Gastrocnemius medialis (tissue), 4 donors: ENCODE measurements at regions of chr3 and their contacts with region 1.

Region 1: GRCh38 chr3:151660885-151661284 is 72.8 kb upstream of the AADACL2 start:
- DNase-seq: no peak
- ATAC-seq: no peak
- H3K4me3 ChIP-seq: no peak overlapping the region
- H3K27ac ChIP-seq: no peak overlapping the region
- H3K4me1 ChIP-seq: no peaks in the 10 kb centered on the region
- H3K27me3 ChIP-seq: no peaks in the 10 kb centered on the region
- CTCF ChIP-seq: peak in 3 of 5 experiments; percentile 12 to 28 (median 20)
- POLR2A ChIP-seq: no peak

Region 2: DNA sequence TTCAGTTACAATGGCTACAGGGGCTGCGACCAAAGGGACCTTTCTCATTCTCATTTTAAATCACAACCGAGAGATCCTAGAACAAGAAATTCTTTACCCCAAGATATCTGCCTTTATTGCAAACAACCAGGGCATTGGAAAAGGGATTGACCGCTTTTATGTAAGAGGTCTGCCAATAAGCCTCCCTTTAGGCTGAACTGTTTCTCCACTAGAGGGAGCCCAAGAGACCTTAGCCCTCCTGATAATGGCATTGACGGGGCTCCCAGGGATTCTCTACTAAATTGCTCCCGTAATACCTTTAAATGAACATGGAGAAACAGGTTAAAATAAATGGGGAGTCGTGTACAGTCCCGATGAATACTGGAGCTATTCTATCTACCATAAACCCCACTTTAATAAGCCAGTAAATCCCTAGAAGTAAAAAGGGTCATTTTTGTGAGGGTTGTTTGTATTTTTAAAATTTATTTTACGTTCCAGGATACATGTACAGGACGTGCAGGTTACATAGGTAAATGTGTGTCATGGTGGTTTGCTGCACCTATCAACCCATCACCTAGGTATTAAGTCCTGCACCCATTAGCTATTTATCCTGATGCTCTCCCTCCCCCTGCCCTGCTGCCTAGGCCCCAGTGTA is 192.5 kb before region 1 on chr3:
- in situ Hi-C with region 1: loop called (anchors 10 to 25 kb)
- intact Hi-C with region 1: loop called (anchors 2 kb)
- DNase-seq: no peak
- ATAC-seq: peak; percentile 50 to 72
- H3K4me3 ChIP-seq: no peak overlapping the region
- H3K27ac ChIP-seq: no peak overlapping the region
- H3K4me1 ChIP-seq: no peaks in the 10 kb centered on the region
- H3K27me3 ChIP-seq: no peaks in the 10 kb centered on the region
- CTCF ChIP-seq: peak; percentile 48 to 83 (median 67)
- POLR2A ChIP-seq: no peak

Region 3: DNA sequence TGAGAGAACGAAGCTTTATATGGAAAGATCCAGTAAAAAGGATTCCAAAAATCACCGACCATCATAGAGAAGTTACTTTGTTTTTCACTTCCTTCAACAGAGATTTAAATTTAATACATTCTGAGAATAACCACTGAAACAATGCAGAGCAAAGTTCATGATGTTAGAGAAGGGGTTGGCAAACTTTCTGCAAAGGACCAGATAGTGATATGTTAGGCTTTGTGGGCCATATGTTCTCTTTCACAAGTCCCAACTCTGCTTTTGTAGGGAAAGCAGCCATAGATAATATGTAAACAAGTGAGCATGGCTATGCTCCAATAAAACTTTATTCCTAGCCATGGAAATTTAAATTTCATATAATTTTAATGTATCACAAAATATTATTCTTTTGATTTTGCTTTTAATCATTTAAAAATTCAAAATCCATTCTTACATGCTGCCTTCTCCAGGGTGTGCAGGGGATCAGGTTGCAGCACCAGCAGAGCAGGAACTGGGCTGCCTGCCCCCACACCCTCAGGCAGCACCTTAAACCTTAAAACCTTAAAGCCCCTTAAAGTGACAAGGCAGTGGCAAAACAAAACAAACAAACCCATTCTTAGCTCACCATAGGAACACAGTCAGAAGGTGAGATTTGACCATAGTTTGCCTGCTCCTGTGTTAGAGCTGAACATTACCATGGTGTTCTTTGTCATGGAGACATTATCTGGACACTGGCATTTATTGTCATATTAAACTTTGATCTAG is 183.1 kb before region 1 on chr3:
- in situ Hi-C with region 1: loop called (anchors 10 to 25 kb)
- intact Hi-C with region 1: no loop called
- DNase-seq: no peak
- ATAC-seq: no peak
- H3K4me3 ChIP-seq: no peak overlapping the region
- H3K27ac ChIP-seq: no peak overlapping the region
- H3K4me1 ChIP-seq: peaks cover 10 to 11% of the 10 kb centered on the region in 2 donors
- H3K27me3 ChIP-seq: no peaks in the 10 kb centered on the region
- CTCF ChIP-seq: no peak
- POLR2A ChIP-seq: no peak

Region 4: DNA sequence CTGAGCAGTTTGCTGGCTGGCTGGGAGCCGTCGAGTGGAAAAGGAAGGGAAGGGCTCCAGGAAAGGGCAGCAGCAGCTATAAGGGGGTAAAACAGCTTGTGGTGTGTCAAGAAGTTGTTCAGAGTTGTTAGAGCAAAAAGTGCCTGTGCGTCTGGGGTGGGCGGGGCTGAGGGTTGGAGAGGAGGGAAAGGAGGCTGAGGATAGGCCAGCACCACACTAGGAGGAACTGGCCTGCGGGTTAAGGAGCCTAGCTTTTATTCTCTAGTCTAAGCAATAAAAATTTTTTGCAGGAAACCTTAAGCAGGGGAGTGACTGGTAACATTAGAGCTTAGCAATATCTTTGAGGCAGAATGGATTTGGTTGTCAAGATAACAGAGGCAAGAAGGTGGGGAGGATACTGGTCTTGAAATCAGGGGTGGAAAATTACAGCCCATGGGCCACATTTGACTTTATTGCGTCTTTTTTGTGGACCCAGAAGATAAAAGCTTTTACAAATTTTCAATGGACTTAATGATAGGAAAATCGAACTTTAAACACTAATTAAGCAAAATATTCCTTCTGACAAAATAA is 61.7 kb before region 1 on chr3:
- in situ Hi-C with region 1: no loop called
- intact Hi-C with region 1: no loop called
- DNase-seq: no peak
- ATAC-seq: no peak
- H3K4me3 ChIP-seq: no peak overlapping the region
- H3K27ac ChIP-seq: no peak overlapping the region
- H3K4me1 ChIP-seq: no peaks in the 10 kb centered on the region
- H3K27me3 ChIP-seq: no peaks in the 10 kb centered on the region
- CTCF ChIP-seq: no peak
- POLR2A ChIP-seq: no peak